Activated naive CD4-positive, alpha-beta T cell treated with anti-CD3 and anti-CD28 coated beads for 36 hours (primary cell): ENCODE measurements at regions of chr7 and their contacts with region 1.

Region 1: DNA sequence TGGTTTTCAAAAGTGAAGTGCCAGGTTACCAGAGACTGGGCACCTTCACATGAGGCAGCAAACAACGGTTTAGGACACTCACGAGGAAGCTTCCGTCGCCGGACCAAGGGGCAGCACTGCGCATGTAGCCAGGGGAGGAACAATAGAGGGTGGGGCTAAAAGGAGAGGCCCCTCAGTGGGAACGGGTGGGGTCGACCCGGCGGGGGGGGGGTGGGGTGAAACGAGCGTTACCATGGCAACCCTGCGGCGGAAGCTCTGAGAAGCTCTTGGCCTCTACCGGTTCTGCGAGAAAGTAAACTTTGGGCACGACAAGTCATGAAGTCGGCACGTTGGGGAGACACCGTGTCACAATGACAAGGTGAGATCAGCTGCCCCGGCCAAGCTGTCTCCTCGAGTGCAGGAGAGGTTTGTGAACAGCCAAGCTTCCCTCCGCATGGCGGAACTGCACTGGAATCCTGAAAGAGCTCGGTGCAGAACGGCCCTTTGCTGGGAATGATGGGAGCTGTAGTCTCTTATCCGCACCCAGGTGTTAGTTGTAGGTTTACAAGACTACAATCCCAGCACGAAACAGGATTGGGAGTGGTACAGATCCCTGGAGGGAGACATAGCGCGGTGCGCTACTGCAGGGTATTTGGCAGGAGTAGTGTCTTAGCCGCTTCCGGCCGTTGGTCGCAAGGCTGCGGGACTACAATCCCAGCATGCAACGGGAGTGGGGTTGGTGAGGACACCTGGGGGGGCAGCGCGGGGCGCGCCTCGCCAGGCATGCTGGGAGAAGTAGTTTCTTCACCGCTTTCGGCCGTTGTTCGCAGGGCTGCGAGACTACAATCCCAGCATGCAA is 72.8 kb upstream of the ZNF722 start:
- DNase-seq: peak; percentile 93
- H3K4me3 Mint-ChIP-seq: peak overlapping the region; percentile 93
- H3K27ac Mint-ChIP-seq: peak overlapping the region; percentile 96
- H3K4me1 Mint-ChIP-seq: peaks cover 9% of the 10 kb centered on the region
- H3K27me3 Mint-ChIP-seq: no peaks in the 10 kb centered on the region

Region 2: DNA sequence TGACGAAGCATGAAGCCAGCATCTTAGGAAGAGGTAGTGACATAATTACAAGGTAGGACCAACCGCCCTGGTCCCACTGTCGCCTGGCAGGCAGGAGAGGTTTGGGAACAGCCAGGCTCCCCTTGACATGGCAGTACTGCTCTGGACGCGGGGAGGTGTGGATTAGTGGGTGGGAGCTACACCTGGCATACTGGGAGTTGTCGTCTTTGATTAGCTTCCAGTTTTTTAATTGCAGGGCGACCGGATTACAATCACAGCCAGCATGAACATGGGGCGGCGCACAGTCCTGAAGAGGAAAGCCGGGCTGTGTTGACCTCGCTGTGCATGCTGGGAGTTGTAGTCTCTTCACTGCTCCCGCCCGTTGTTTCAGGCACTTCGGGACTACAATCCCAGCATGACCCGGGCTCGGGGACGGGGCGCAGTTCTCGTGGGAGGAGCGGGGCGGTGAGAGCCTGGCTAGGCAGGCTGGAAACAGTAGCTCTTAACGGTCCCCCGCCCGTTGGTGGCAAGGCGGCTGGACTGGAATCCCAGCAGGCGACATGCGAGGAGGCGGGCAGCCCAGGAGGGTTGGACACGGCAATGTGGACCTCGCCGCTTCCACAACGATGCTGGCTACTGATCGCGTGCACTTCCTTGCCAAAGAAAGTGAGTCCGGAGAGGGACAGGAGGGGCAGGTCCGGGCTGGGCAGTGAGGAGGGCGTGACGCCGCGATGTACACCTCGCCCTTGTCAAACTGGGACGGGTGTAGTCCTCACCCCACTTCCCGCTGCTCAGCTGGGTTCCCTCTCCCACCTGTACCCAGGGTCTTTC is 25.2 kb before region 1 on chr7:
- CTCF ChIA-PET with region 1: no interaction called
- intact Hi-C with region 1: loop called (anchors 1 kb)
- DNase-seq: peak; percentile 95
- H3K4me3 Mint-ChIP-seq: peak overlapping the region; percentile 93
- H3K27ac Mint-ChIP-seq: peak overlapping the region; percentile 77
- H3K4me1 Mint-ChIP-seq: peaks cover 8% of the 10 kb centered on the region
- H3K27me3 Mint-ChIP-seq: no peaks in the 10 kb centered on the region

Region 3: DNA sequence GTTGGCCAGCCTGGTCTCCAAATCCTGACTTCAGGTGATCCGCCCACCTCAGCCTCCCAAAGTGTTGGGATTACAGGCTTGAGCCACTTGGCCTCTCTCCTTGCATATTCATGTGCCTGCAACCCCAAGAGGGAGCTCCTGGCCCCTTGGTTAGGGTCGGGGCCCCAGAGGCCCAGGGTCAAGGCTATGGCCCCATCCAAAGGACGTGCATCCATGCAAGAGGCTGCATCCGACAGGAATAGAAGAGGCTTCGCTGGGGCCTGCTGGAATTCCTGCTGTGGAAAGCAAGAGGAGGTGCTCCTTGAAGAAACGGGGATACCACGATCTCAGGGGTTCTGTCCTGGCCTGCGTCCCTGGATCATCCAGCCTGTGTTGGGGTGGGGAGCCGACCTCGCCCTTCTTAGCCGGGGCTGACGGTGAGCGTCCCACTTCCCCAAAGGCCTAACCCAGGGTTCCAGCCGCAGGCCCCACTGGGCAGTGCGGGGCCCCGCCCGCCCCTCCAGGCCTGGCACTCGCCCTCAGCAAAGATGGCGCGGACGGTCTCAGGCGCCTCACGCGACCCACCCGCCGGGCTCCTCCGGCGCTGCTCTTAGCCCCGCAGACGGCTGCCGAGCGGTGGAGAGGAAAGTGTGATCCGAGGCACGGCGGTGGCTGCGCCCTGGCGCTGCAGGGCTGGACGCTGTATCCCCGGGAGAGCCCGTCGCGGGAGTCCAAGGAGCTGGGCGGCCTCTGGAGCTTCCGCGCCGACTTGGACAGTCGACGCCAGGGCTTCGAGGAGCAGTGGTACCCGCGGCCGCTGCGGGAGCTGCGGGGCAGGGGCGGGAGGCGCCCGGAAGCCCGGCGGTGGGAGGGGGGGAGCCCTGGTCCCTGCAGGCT is 174.1 kb after region 1 on chr7:
- CTCF ChIA-PET with region 1: no interaction called
- intact Hi-C with region 1: no loop called
- DNase-seq: no peak
- H3K4me3 Mint-ChIP-seq: no peak overlapping the region
- H3K27ac Mint-ChIP-seq: no peak overlapping the region
- H3K4me1 Mint-ChIP-seq: no peaks in the 10 kb centered on the region
- H3K27me3 Mint-ChIP-seq: no peaks in the 10 kb centered on the region

Region 4: GRCh38 chr7:64307254-64308015 is 381.6 kb after region 1 on chr7:
- CTCF ChIA-PET with region 1: no interaction called
- intact Hi-C with region 1: loop called (anchors 1 kb)
- DNase-seq: peak; percentile 95
- H3K4me3 Mint-ChIP-seq: peak overlapping the region; percentile 89
- H3K27ac Mint-ChIP-seq: peak overlapping the region; percentile 95
- H3K4me1 Mint-ChIP-seq: peaks cover 26% of the 10 kb centered on the region
- H3K27me3 Mint-ChIP-seq: no peaks in the 10 kb centered on the region

Region 5: GRCh38 chr7:64562626-64563275 is 636.9 kb after region 1 on chr7 and contains the start of gene ZNF680:
- CTCF ChIA-PET with region 1: no interaction called
- intact Hi-C with region 1: loop called (anchors 1 kb)
- DNase-seq: peak; percentile 96
- H3K4me3 Mint-ChIP-seq: peak within 1 kb of the TSS; percentile 100
- H3K27ac Mint-ChIP-seq: peak within 1 kb of the TSS; percentile 97
- H3K4me1 Mint-ChIP-seq: peaks cover 24% of the 10 kb centered on the region
- H3K27me3 Mint-ChIP-seq: no peaks in the 10 kb centered on the region
- total RNA-seq, gene ZNF680: 13.4 to 14.0 TPM

Region 6: DNA sequence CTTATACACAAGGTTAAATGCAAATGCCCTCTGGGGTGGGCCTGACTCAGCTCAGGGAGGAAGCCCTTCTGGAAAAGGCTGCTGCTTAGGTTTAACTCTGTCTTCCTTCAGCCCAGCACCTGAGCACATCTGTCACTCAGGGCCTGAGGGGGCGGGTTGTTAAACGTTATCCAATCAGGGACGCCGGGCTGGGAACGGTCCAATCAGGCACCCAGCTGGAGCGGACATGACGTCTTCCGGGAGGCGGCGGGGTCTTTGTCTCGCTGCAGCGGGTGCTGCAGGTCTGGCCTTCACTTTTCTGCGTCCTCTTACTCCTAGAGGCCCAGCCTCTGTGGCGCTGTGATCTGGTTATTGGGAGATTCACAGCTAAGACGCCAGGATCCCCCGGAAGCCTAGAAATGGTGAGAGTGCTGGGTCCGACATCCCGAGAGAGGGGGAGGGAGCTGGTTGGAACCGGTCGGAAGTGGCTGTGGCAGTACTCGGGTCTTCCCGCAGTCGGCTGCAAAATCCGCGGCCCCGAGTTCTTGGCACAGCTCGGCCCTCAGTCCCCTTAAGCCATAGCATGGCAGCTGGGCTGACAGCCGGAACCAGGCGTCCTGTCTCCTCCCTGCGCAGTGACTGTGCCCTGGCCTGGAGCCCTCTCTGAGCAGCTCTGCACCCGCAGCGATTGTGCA is 868.5 kb after region 1 on chr7 and contains the start of gene ZNF138:
- CTCF ChIA-PET with region 1: no interaction called
- intact Hi-C with region 1: loop called (anchors 1 kb)
- DNase-seq: peak; percentile 98
- H3K4me3 Mint-ChIP-seq: peak within 1 kb of the TSS; percentile 97
- H3K27ac Mint-ChIP-seq: peak within 1 kb of the TSS; percentile 95
- H3K4me1 Mint-ChIP-seq: peaks cover 26% of the 10 kb centered on the region
- H3K27me3 Mint-ChIP-seq: no peaks in the 10 kb centered on the region
- total RNA-seq, gene ZNF138: 10.6 to 10.7 TPM